PC-9 (cell line): ENCODE measurements at regions of chr7 and their contacts with region 1.

Region 1: DNA sequence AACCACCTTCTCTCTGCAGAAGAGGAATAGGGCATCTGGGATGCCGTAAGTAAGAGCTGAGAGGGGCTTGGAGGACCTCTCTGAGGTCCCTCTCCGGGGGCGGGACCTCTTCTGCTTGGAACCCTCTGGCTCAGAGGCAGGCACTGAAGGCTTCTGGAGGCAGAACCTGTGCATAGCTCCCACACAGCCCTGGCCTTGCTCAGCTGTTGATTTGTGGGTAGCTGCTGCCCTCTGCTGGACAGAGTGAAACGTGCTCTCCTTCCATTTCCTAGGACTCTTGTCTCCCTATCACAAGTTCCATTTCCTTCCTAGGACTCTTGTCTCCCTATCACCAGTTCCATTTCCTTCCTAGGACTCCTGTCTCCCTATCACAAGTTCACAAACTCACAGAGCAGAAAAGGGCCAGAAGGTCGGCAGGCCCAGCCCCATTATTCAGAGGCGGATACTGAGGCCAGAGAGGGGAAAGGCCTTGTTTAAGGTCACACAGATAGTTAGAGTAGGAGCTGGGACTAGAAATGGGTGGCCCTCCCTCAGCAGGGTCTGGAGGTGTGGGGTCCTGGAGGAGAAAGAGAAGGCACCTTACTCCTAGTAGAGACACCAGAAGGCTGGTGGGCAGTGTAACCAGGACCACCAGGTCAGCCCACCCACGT is 30.3 kb upstream of the GARS1 start:
- DNase-seq: peak; percentile 74 to 83
- H3K4me3 ChIP-seq: no peak overlapping the region
- H3K27ac ChIP-seq: no peak overlapping the region
- H3K4me1 ChIP-seq: peaks cover 15% of the 10 kb centered on the region
- H3K27me3 ChIP-seq: no peaks in the 10 kb centered on the region
- CTCF ChIP-seq: peak; percentile 97

Region 2: DNA sequence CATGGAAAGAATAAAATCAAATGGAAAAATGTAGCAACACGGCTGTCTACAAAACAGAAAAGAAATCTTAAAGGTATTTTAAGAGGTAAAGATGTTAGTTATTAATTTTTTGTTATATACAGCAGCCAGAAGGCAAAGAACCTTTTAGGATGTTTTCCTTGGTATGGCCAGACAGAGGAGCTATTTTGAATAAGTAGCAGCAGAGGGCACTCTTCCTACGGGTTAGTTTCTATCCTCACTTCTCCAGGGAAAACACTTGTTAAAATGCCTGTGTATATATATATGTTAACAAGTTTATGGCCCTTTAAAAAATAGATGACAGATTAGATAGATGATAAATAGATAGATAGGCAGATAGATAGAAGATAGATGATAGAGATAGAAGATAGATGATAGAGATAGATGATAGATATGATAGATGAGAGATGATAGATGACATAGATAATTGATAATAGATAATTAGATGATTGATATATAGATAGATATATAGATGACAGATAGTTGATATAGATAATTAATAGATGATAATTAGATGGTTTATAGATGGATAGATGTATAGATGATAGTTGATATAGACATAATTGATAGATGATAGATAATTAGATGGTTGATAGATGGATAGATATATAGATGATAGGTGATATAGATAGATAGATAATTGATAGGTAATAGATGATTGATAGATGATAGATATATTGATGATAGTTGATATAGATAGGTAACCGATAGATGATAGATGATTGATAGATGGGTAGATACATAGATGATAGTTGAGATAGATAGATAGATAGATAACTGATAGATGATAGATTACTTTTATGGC is 815.9 kb before region 1 on chr7:
- CTCF ChIA-PET with region 1: interaction called, 3 read pairs
- POLR2A ChIA-PET with region 1: no interaction called
- intact Hi-C with region 1: loop called (anchors 10 kb)
- DNase-seq: peak in 1 of 2 experiments; percentile 69
- H3K4me3 ChIP-seq: no peak overlapping the region
- H3K27ac ChIP-seq: no peak overlapping the region
- H3K4me1 ChIP-seq: peaks cover 4% of the 10 kb centered on the region; the same call in 1 of the 2 replicates
- H3K27me3 ChIP-seq: no peaks in the 10 kb centered on the region
- CTCF ChIP-seq: peak; percentile 85

Region 3: DNA sequence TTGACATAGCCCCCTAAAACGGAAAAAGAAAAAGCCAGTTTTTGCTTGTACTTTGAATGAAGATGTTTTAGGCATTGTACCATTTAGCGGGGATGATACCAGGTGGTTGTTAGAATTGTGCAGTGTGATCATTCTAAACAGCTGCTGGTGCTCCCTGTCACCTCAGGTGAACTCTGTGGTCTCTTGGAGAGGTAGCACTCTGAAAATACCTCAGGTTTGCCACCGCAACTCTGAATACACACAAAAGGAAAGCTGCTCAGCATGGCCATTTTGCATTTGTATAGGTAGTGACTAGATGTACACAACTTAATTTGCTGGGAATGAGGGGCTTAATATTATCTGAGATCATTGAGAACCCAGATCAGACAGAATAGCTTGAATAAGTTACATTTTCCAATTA is 483.6 kb before region 1 on chr7:
- CTCF ChIA-PET with region 1: no interaction called
- POLR2A ChIA-PET with region 1: no interaction called
- intact Hi-C with region 1: loop called (anchors 5 kb)
- DNase-seq: no peak
- H3K4me3 ChIP-seq: no peak overlapping the region
- H3K27ac ChIP-seq: no peak overlapping the region
- H3K4me1 ChIP-seq: no peaks in the 10 kb centered on the region
- H3K27me3 ChIP-seq: no peaks in the 10 kb centered on the region
- CTCF ChIP-seq: no peak

Region 4: GRCh38 chr7:30284298-30285066 is 279.9 kb before region 1 on chr7 and contains the start of gene ZNRF2:
- CTCF ChIA-PET with region 1: no interaction called
- POLR2A ChIA-PET with region 1: no interaction called
- intact Hi-C with region 1: loop called (anchors 2 kb)
- DNase-seq: peak; percentile 99 to 100
- H3K4me3 ChIP-seq: peak within 1 kb of the TSS; percentile 74
- H3K27ac ChIP-seq: peak within 1 kb of the TSS; percentile 79
- H3K4me1 ChIP-seq: peaks cover 32% of the 10 kb centered on the region
- H3K27me3 ChIP-seq: no peaks in the 10 kb centered on the region
- CTCF ChIP-seq: no peak; the same call in 1 of the 2 replicates
- total RNA-seq, gene ZNRF2: 24.7 and 28.2 TPM in 2 replicates

Region 5: DNA sequence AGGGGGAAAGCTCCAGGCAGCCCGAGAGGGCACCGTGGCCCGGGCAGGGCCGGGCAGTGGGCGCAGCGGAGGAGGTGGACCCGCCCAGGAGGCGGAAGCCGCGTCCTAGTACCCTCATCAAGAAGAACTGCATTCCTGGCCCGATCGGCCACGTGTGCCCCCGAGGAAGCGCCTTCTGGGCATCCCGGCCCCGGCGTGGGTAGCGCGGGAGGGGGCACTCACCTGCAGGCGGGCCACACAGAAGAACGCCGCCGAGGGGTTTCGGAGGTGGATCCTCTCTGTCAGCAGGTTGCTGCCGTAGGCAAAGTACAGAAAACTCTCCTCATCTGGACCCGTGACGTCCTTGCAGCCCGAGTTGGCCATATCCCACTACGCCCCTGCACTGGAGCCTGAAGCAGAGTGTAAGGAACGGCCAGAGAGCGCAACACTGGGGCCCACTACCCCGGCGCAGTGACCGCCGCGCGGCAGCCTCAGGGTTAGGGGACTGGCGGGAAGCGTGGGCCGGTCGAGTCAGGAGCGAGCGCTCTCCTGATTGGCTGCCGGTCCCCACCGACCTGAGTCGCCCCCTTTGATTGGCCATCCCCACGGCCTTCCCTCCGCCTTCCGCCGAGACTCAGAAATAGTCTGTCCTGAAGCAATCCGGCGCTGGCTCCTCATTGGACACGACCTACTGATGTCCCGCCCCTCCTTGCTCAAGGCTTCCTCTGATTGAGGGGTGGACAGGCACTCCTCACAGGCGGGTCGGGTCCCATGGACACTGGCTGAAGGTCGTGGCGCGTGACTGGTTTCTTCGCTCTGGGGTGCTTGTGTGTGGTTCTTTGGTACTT is 59.8 kb before region 1 on chr7 and contains the start of gene GGCT:
- CTCF ChIA-PET with region 1: no interaction called
- POLR2A ChIA-PET with region 1: no interaction called
- intact Hi-C with region 1: loop called (anchors 2 kb)
- DNase-seq: peak; percentile 99
- H3K4me3 ChIP-seq: peak within 1 kb of the TSS; percentile 81
- H3K27ac ChIP-seq: peak within 1 kb of the TSS; percentile 27
- H3K4me1 ChIP-seq: peaks cover 62% of the 10 kb centered on the region
- H3K27me3 ChIP-seq: no peaks in the 10 kb centered on the region
- CTCF ChIP-seq: no peak
- total RNA-seq, gene GGCT: 151 and 162 TPM in 2 replicates